WTC11 (cell line): ENCODE measurements at regions of chr17 and their contacts with region 1.

Region 1: DNA sequence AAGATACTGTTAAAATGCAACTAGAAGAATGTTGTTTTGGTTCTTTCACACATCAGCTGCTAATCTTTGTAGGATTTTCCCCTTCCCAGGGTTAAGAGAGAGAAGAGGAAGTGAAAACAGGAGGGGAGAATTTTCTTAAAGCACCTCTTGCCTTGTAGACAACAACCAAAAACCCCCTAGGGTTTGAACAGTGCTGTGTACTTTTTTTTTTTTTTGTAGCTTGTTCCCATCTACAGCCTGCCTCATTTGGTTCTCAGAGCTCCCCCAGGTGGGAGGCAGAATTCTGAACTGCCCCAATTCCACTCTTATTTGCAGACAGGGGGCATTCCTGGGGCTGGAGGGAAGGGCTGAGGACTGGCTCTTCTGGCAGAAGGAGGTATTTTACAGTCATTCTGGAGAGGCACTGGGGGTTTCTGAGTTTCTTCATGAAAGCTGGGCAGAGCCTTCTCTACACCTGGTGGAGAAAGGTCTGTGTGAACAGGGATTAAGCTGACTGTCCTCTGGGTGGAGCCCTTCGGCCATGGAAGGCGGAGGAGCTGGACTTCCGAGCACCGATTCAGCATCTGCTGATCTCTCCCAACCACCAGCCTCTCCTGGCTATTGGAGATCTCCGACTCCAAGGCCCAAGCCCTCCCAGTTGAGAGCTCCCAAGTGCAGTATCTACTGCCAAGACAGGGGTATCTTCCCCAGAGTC is 32.2 kb downstream of the SMARCE1 start:
- DNase-seq: peak; percentile 73
- ATAC-seq: peak; percentile 82
- H3K4me3 Mint-ChIP-seq: no peak overlapping the region
- H3K27ac Mint-ChIP-seq: no peak overlapping the region
- H3K4me1 Mint-ChIP-seq: peaks cover 5% of the 10 kb centered on the region
- H3K27me3 Mint-ChIP-seq: peaks cover 6% of the 10 kb centered on the region; the same call in 1 of the 2 replicates
- CTCF ChIP-seq: no peak

Region 2: DNA sequence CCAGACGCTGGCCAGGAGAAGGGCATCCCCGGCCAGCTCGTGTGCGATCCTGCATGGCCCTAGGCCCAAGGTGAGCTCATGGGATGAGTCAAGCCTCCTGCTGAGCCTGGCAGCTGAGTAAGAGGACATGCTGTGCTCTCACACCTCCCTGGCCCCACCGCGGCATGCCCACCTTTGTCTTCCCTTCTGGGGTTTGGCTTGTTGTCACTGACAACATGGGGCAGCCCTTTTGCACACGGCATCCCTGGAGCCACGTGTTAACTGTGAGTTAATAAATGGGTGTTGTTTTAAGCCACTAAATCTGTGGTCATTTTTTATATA is 105.2 kb before region 1 on chr17:
- CTCF ChIA-PET with region 1: no interaction called
- POLR2A ChIA-PET with region 1: no interaction called
- DNase-seq: no peak
- ATAC-seq: no peak
- H3K4me3 Mint-ChIP-seq: no peak overlapping the region
- H3K27ac Mint-ChIP-seq: no peak overlapping the region
- H3K4me1 Mint-ChIP-seq: peaks cover 17% of the 10 kb centered on the region
- H3K27me3 Mint-ChIP-seq: no peaks in the 10 kb centered on the region; the same call in 1 of the 2 replicates
- CTCF ChIP-seq: no peak

Region 3: GRCh38 chr17:40559954-40560591 is 55.4 kb before region 1 on chr17:
- CTCF ChIA-PET with region 1: interaction called, 17 read pairs
- POLR2A ChIA-PET with region 1: no interaction called
- DNase-seq: peak; percentile 93
- ATAC-seq: peak; percentile 83
- H3K4me3 Mint-ChIP-seq: no peak overlapping the region
- H3K27ac Mint-ChIP-seq: no peak overlapping the region
- H3K4me1 Mint-ChIP-seq: peaks cover 42% of the 10 kb centered on the region
- H3K27me3 Mint-ChIP-seq: peaks cover 5% of the 10 kb centered on the region
- CTCF ChIP-seq: peak; percentile 96

Region 4: GRCh38 chr17:40696537-40697072 is 81.2 kb after region 1 on chr17:
- CTCF ChIA-PET with region 1: interaction called, 10 read pairs
- POLR2A ChIA-PET with region 1: no interaction called
- DNase-seq: no peak
- ATAC-seq: no peak
- H3K4me3 Mint-ChIP-seq: no peak overlapping the region
- H3K27ac Mint-ChIP-seq: no peak overlapping the region
- H3K4me1 Mint-ChIP-seq: peaks cover 8% of the 10 kb centered on the region
- H3K27me3 Mint-ChIP-seq: no peaks in the 10 kb centered on the region
- CTCF ChIP-seq: no peak

Region 5: DNA sequence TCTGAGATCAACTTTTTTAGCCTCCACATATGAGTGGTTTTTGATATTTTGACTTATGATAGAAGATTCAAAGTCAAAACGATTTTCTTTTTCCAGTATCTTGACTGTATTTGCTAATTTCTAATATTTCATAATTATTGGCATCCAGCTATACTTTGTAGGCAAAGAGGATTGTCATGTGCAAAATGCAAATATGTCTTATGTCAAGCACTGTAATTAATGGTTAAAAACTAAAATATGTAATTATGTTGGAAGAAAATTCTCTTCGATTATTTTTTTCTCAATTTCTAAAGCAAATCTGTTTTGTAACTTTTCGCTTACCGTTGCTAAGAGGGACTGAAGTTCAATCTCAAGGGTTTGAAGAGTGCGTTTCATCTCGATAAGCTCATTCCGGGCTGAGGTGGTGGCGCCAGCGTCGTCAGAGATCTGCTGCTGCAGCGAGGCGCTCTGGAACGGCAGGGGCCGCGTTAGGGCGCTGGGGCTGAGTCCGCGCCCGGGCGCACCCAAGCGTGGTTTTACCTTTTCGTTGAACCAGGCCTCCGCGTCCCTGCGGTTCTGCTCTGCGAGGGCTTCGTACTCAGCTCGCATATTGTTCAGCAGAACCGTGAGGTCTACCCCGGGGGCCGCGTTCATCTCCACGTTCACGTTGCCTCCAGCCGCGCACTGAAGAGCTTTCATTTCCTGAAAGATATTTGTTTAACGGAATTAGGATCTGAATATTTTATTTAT is 163.9 kb after region 1 on chr17:
- CTCF ChIA-PET with region 1: interaction called, 12 read pairs
- POLR2A ChIA-PET with region 1: no interaction called
- DNase-seq: peak; percentile 35
- ATAC-seq: peak; percentile 57; the same call in 1 of the 2 replicates
- H3K4me3 Mint-ChIP-seq: peak overlapping the region; percentile 30
- H3K27ac Mint-ChIP-seq: no peak overlapping the region
- H3K4me1 Mint-ChIP-seq: no peaks in the 10 kb centered on the region
- H3K27me3 Mint-ChIP-seq: peaks cover 28% of the 10 kb centered on the region
- CTCF ChIP-seq: no peak

Region 6: GRCh38 chr17:40818733-40819527 is 203.5 kb after region 1 on chr17:
- CTCF ChIA-PET with region 1: interaction called, 10 read pairs
- POLR2A ChIA-PET with region 1: no interaction called
- DNase-seq: peak; percentile 71
- ATAC-seq: peak; percentile 66
- H3K4me3 Mint-ChIP-seq: peak overlapping the region; percentile 90
- H3K27ac Mint-ChIP-seq: peak overlapping the region; percentile 71; the same call in 1 of the 2 replicates
- H3K4me1 Mint-ChIP-seq: peaks cover 14% of the 10 kb centered on the region
- H3K27me3 Mint-ChIP-seq: peaks cover 47% of the 10 kb centered on the region
- CTCF ChIP-seq: no peak